B cell (primary cell): ENCODE measurements at regions of chr12 and their contacts with region 1.

Region 1: GRCh38 chr12:49967042-49967776 is 5.5 kb downstream of the AQP5 start:
- DNase-seq: peak; percentile 91
- ATAC-seq: peak; percentile 91
- H3K4me3 ChIP-seq: peak overlapping the region; percentile 7 to 66 (median 45)
- H3K4me3 Mint-ChIP-seq: peak overlapping the region; percentile 81
- H3K27ac ChIP-seq: no peak overlapping the region
- H3K27ac Mint-ChIP-seq: no peak overlapping the region
- H3K4me1 ChIP-seq: peaks cover 11% of the 10 kb centered on the region in 2 donors
- H3K4me1 Mint-ChIP-seq: peaks cover 7% of the 10 kb centered on the region
- H3K27me3 ChIP-seq: peaks cover 0 to 64% (median 16%) of the 10 kb centered on the region in 4 experiments
- H3K27me3 Mint-ChIP-seq: peaks cover 43% of the 10 kb centered on the region
- CTCF ChIP-seq: peak; percentile 91

Region 2: GRCh38 chr12:49893753-49894752 is 73.2 kb before region 1 on chr12:
- CTCF ChIA-PET with region 1: no interaction called
- POLR2A ChIA-PET with region 1: no interaction called
- intact Hi-C with region 1: no loop called
- DNase-seq: no peak
- ATAC-seq: peak; percentile 67
- H3K4me3 ChIP-seq: no peak overlapping the region
- H3K4me3 Mint-ChIP-seq: no peak overlapping the region
- H3K27ac ChIP-seq: no peak overlapping the region
- H3K27ac Mint-ChIP-seq: peak overlapping the region; percentile 75
- H3K4me1 ChIP-seq: peaks cover 0 to 8% of the 10 kb centered on the region in 2 donors
- H3K4me1 Mint-ChIP-seq: peaks cover 6% of the 10 kb centered on the region
- H3K27me3 ChIP-seq: peaks cover 0 to 8% (median 0%) of the 10 kb centered on the region in 4 experiments
- H3K27me3 Mint-ChIP-seq: peaks cover 15% of the 10 kb centered on the region
- CTCF ChIP-seq: no peak

Region 3: GRCh38 chr12:49909826-49910225 is 57.4 kb before region 1 on chr12:
- CTCF ChIA-PET with region 1: no interaction called
- POLR2A ChIA-PET with region 1: no interaction called
- intact Hi-C with region 1: no loop called
- DNase-seq: no peak
- ATAC-seq: no peak
- H3K4me3 ChIP-seq: no peak overlapping the region
- H3K4me3 Mint-ChIP-seq: no peak overlapping the region
- H3K27ac ChIP-seq: no peak overlapping the region
- H3K27ac Mint-ChIP-seq: no peak overlapping the region
- H3K4me1 ChIP-seq: no peaks in the 10 kb centered on the region
- H3K4me1 Mint-ChIP-seq: no peaks in the 10 kb centered on the region
- H3K27me3 ChIP-seq: peaks cover 0 to 5% (median 0%) of the 10 kb centered on the region in 4 experiments
- H3K27me3 Mint-ChIP-seq: peaks cover 26% of the 10 kb centered on the region
- CTCF ChIP-seq: no peak

Region 4: DNA sequence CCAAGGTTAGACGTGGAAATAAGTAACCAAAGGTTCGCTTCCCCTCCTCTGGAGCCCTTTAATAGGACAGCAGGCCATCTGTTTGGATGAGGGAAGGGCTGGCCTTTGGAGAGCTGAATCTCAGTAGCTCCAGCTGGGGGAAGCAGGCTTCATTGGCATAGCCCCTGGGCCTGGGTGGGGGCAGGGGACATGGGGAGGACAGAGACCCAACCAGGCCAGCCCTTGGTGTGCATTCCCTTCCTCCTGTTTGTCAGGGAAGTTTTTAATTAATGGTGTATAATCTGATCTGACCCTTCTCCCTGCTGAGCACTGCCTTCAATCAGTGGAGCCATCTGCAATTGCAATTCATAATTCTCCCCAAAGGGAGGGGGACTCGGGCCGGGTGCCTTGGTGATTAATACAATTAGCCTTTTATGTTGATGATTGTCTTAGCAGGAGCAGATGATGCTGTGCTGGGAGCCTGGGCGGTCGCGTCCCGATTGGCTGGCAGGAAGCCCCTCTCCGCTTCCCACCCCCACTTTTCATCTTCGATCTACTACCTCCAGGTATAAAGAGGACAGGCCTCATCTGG is 11.9 kb after region 1 on chr12:
- CTCF ChIA-PET with region 1: interaction called, 28 read pairs
- POLR2A ChIA-PET with region 1: no interaction called
- intact Hi-C with region 1: no loop called
- DNase-seq: no peak
- ATAC-seq: no peak
- H3K4me3 ChIP-seq: no peak overlapping the region
- H3K4me3 Mint-ChIP-seq: no peak overlapping the region
- H3K27ac ChIP-seq: no peak overlapping the region
- H3K27ac Mint-ChIP-seq: no peak overlapping the region
- H3K4me1 ChIP-seq: no peaks in the 10 kb centered on the region
- H3K4me1 Mint-ChIP-seq: no peaks in the 10 kb centered on the region
- H3K27me3 ChIP-seq: no peaks in the 10 kb centered on the region
- H3K27me3 Mint-ChIP-seq: no peaks in the 10 kb centered on the region
- CTCF ChIP-seq: no peak

Region 5: DNA sequence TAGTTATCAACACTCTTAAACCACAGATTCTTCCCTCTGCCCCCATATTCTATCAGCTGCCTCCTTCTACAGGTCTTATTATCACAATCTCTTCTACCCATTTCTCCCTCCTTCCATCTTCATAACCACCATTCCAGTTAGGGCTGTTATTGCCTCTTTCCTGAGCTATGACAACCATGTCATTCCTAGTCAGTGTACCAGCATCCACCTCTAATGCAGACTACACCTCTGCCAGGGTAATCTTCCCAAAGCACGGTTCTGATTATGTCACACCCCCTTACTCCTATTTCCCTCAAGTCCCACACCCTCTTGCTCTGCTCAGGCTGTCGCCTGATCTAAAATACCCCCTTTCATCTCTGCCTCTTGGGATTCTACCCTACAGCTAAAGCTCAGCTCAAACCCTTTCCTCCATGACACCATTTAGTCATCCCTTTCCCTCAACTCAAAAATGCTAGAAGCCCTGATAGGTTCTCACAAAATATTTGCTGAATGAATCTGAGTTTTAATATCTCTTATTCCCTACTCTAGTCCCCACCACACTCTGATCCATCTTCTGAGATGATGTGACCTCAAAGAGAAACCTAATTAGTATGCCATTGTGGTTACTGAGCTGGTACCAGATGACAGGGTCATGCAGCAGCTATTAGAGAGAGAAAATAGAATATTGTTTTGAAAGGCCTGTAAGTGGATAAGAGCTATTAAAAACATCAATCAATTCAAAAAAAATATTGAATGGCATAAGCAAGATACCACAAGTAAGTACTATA is 46.4 kb after region 1 on chr12:
- CTCF ChIA-PET with region 1: interaction called, 10 read pairs
- POLR2A ChIA-PET with region 1: no interaction called
- intact Hi-C with region 1: no loop called
- DNase-seq: no peak
- ATAC-seq: no peak
- H3K4me3 ChIP-seq: no peak overlapping the region
- H3K4me3 Mint-ChIP-seq: no peak overlapping the region
- H3K27ac ChIP-seq: no peak overlapping the region
- H3K27ac Mint-ChIP-seq: no peak overlapping the region
- H3K4me1 ChIP-seq: no peaks in the 10 kb centered on the region
- H3K4me1 Mint-ChIP-seq: peaks cover 2% of the 10 kb centered on the region
- H3K27me3 ChIP-seq: no peaks in the 10 kb centered on the region
- H3K27me3 Mint-ChIP-seq: no peaks in the 10 kb centered on the region
- CTCF ChIP-seq: no peak

Region 6: GRCh38 chr12:50050410-50051098 is 83.3 kb after region 1 on chr12:
- CTCF ChIA-PET with region 1: interaction called, 90 read pairs
- POLR2A ChIA-PET with region 1: no interaction called
- intact Hi-C with region 1: no loop called
- DNase-seq: no peak
- ATAC-seq: no peak
- H3K4me3 ChIP-seq: no peak overlapping the region
- H3K4me3 Mint-ChIP-seq: no peak overlapping the region
- H3K27ac ChIP-seq: no peak overlapping the region
- H3K27ac Mint-ChIP-seq: no peak overlapping the region
- H3K4me1 ChIP-seq: peaks cover under 1 to 4% of the 10 kb centered on the region in 2 donors
- H3K4me1 Mint-ChIP-seq: peaks cover 4% of the 10 kb centered on the region
- H3K27me3 ChIP-seq: peaks cover 0 to 36% (median 23%) of the 10 kb centered on the region in 4 experiments
- H3K27me3 Mint-ChIP-seq: peaks cover 42% of the 10 kb centered on the region
- CTCF ChIP-seq: no peak

Region 7: GRCh38 chr12:50074936-50075807 is 108.0 kb after region 1 on chr12:
- CTCF ChIA-PET with region 1: interaction called, 93 read pairs
- POLR2A ChIA-PET with region 1: no interaction called
- intact Hi-C with region 1: no loop called
- DNase-seq: peak; percentile 87
- ATAC-seq: peak; percentile 97
- H3K4me3 ChIP-seq: no peak overlapping the region
- H3K4me3 Mint-ChIP-seq: no peak overlapping the region
- H3K27ac ChIP-seq: no peak overlapping the region
- H3K27ac Mint-ChIP-seq: no peak overlapping the region
- H3K4me1 ChIP-seq: peaks cover 0 to 12% of the 10 kb centered on the region in 2 donors
- H3K4me1 Mint-ChIP-seq: peaks cover 4% of the 10 kb centered on the region
- H3K27me3 ChIP-seq: no peaks in the 10 kb centered on the region
- H3K27me3 Mint-ChIP-seq: peaks cover 11% of the 10 kb centered on the region
- CTCF ChIP-seq: peak; percentile 95